A673 (cell line): ENCODE measurements at regions of chr20 and their contacts with region 1.

Region 1: GRCh38 chr20:38338849-38339520 is 7.3 kb upstream of the LBP start:
- DNase-seq: no peak
- H3K4me3 ChIP-seq: no peak overlapping the region
- H3K27ac ChIP-seq: no peak overlapping the region
- H3K4me1 ChIP-seq: no peaks in the 10 kb centered on the region
- H3K27me3 ChIP-seq: peaks cover 18% of the 10 kb centered on the region
- CTCF ChIP-seq: 0 out of 2 replicates have a peak, but pooled peaks have one; percentile 31

Region 2: DNA sequence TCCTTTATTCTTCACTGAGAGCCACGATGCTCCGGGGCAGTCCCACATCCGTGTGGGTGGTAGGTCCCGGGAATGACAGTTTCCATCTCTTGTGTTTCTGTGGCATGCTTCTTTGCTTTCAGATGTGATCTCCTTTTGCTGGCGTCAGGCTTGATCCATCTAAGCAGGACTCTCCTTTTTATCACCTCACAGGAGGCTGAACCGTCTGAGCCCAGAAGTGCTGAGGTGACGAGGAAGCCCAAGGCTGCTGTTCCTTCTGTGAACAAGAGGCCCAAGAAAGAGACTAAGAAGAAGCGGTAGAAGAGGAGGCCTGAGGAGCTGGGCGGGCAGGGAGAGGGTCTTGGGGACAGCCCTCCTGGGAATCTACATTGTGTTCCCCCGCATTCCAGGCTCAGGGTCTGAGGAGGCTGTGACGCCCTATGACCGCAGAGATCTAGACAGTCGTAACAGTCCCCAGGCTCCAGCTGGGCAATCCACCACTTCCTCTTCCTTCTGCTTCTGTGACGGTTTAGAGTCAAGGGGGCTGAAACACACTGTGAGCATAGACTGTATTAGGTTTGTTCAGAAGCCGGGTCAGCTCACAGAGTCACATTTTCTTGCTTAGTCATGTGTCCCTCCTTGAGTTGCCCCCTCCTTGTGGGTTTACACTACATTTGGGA is 1022.7 kb before region 1 on chr20:
- CTCF ChIA-PET with region 1: no interaction called
- POLR2A ChIA-PET with region 1: no interaction called
- intact Hi-C with region 1: no loop called
- DNase-seq: no peak
- H3K4me3 ChIP-seq: no peak overlapping the region
- H3K27ac ChIP-seq: no peak overlapping the region
- H3K4me1 ChIP-seq: no peaks in the 10 kb centered on the region
- H3K27me3 ChIP-seq: no peaks in the 10 kb centered on the region
- CTCF ChIP-seq: no peak

Region 3: GRCh38 chr20:38412877-38413577 is 74.0 kb after region 1 on chr20:
- CTCF ChIA-PET with region 1: interaction called, 6 read pairs
- POLR2A ChIA-PET with region 1: no interaction called
- intact Hi-C with region 1: loop called (anchors 1 kb)
- DNase-seq: no peak
- H3K4me3 ChIP-seq: no peak overlapping the region
- H3K27ac ChIP-seq: no peak overlapping the region
- H3K4me1 ChIP-seq: no peaks in the 10 kb centered on the region
- H3K27me3 ChIP-seq: no peaks in the 10 kb centered on the region
- CTCF ChIP-seq: no peak

Region 4: DNA sequence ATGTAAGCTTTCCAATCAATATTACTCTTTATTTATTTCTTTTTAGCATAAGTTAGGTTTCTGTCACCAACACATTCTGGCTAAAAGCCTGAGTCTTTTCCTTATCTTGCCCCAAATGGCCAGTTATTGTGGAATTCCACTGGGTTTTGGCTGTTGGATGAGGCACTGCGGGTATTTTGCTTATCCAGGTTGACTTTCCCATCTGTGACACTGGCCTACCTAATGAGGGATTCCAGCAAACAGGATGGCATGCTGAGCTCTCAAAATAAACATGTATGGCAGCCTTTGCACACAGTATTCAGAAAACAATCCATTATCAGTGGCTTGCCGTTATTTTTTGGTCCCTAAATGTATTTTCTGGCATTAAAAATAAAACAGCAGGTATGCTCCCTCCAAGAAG is 127.2 kb after region 1 on chr20:
- CTCF ChIA-PET with region 1: no interaction called
- POLR2A ChIA-PET with region 1: no interaction called
- intact Hi-C with region 1: no loop called
- DNase-seq: no peak
- H3K4me3 ChIP-seq: no peak overlapping the region
- H3K27ac ChIP-seq: no peak overlapping the region
- H3K4me1 ChIP-seq: no peaks in the 10 kb centered on the region
- H3K27me3 ChIP-seq: no peaks in the 10 kb centered on the region
- CTCF ChIP-seq: no peak